Activated CD4-positive, alpha-beta memory T cell treated with anti-CD3 and anti-CD28 coated beads for 36 hours (primary cell): ENCODE measurements at regions of chr7 and their contacts with region 1.

Region 1: DNA sequence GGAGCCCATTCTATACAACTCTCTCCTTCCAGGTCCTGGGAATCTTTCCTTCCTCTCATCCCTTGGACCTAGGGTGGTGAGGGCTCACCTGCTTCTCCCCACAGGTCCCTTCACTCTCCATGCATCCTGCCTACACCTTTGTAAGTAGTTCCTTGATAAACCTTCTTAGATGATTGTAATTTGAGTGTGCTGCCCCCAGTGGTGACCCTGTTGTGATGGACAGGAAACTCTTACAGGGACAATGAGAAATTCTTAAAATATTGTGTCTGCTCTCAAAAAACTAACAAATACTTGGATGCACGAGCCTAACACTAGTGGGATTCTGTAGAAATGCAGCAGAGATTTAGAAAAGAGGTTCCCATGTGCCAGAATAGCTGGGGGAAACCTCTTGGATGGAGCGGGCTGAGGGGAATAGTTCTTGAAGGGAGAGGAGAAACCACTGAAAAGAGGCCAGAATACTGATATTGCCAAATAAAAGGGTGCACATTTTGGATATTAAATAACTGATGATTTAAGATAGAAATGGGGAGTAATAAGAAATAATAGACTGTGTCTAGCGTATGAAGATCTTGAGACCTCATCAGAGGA is 6.7 kb upstream of the PAXIP1 start:
- DNase-seq: peak; percentile 38
- H3K4me3 Mint-ChIP-seq: no peak overlapping the region
- H3K27ac Mint-ChIP-seq: no peak overlapping the region
- H3K4me1 Mint-ChIP-seq: peaks cover 4% of the 10 kb centered on the region
- H3K27me3 Mint-ChIP-seq: no peaks in the 10 kb centered on the region

Region 2: GRCh38 chr7:154832557-154833138 is 177.0 kb before region 1 on chr7:
- CTCF ChIA-PET with region 1: no interaction called
- POLR2A ChIA-PET with region 1: no interaction called
- intact Hi-C with region 1: no loop called
- DNase-seq: no peak
- H3K4me3 Mint-ChIP-seq: no peak overlapping the region
- H3K27ac Mint-ChIP-seq: no peak overlapping the region
- H3K4me1 Mint-ChIP-seq: no peaks in the 10 kb centered on the region
- H3K27me3 Mint-ChIP-seq: no peaks in the 10 kb centered on the region

Region 3: DNA sequence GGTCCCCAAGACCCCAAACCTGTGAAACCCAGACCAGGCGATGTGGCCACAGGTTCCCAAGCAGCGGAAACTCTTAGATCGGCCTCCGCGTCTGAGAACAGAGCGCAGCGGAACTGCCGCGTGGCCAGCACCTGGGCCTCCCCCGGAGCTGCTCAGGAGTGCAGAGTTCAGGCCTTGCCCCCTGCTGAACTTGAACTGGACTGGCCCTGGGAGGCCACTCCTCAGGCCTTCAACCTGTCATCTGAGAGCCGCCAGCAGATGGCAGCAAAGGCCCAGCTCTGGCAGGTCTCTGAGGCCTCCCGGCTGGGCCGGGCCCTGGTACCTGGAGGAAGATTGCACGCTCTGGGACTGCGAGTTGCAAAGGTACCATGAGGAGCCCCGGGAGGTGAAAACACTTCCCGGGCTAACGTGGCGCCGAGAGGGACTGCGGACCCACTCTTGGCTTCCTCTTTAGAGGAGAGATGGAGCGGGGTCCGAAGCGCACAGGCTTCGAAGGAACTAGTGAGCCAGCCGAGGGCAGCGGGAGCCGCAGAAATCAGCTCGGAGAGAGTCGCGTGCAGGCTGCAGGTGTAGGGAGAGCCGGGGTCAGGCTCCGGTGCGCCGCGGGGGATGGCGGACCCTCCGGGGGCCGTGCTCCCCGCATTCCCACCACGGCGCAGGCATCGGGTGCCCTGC is 95.9 kb before region 1 on chr7:
- CTCF ChIA-PET with region 1: interaction called, 9 read pairs
- POLR2A ChIA-PET with region 1: no interaction called
- intact Hi-C with region 1: loop called (anchors 1 kb)
- DNase-seq: peak; percentile 90
- H3K4me3 Mint-ChIP-seq: peak overlapping the region; percentile 59
- H3K27ac Mint-ChIP-seq: no peak overlapping the region
- H3K4me1 Mint-ChIP-seq: peaks cover 4% of the 10 kb centered on the region
- H3K27me3 Mint-ChIP-seq: peaks cover 28% of the 10 kb centered on the region